CD4-positive, alpha-beta memory T cell (primary cell): ENCODE measurements at regions of chr9 and their contacts with region 1.

Region 1: GRCh38 chr9:100098887-100099721 is at the starts of genes ERP44 and INVS:
- DNase-seq: peak; percentile 96 to 99 (median 96)
- H3K4me3 ChIP-seq: peak within 1 kb of the TSS; percentile 85 to 89
- H3K4me3 Mint-ChIP-seq: peak within 1 kb of the TSS; percentile 94 to 100 (median 100)
- H3K27ac ChIP-seq: peak within 1 kb of the TSS; percentile 80
- H3K27ac Mint-ChIP-seq: peak within 1 kb of the TSS; percentile 91 to 99 (median 98)
- H3K4me1 ChIP-seq: peaks cover 26% of the 10 kb centered on the region
- H3K4me1 Mint-ChIP-seq: peaks cover 21 to 56% (median 36%) of the 10 kb centered on the region in 4 donors
- H3K27me3 ChIP-seq: no peaks in the 10 kb centered on the region
- H3K27me3 Mint-ChIP-seq: no peaks in the 10 kb centered on the region
- total RNA-seq, gene ERP44: 16.5 to 17.0 TPM
- total RNA-seq, gene INVS: 17.6 to 22.9 TPM

Region 2: GRCh38 chr9:99221621-99222415 is 877.3 kb before region 1 on chr9 and contains the starts of genes ALG2 and SEC61B:
- CTCF ChIA-PET with region 1: no interaction called
- POLR2A ChIA-PET with region 1: no interaction called
- intact Hi-C with region 1: loop called (anchors 5 kb)
- DNase-seq: peak; percentile 92 to 95 (median 93)
- H3K4me3 ChIP-seq: peak within 1 kb of the TSS; percentile 57 to 78
- H3K4me3 Mint-ChIP-seq: peak within 1 kb of the TSS; percentile 95 to 100 (median 98)
- H3K27ac ChIP-seq: peak within 1 kb of the TSS; percentile 82
- H3K27ac Mint-ChIP-seq: peak within 1 kb of the TSS; percentile 99 to 100 (median 100)
- H3K4me1 ChIP-seq: peaks cover 54% of the 10 kb centered on the region
- H3K4me1 Mint-ChIP-seq: peaks cover 51 to 93% (median 74%) of the 10 kb centered on the region in 4 donors
- H3K27me3 ChIP-seq: no peaks in the 10 kb centered on the region
- H3K27me3 Mint-ChIP-seq: no peaks in the 10 kb centered on the region
- total RNA-seq, gene ALG2: 39.1 to 39.8 TPM
- total RNA-seq, gene SEC61B: 101 to 106 TPM

Region 3: DNA sequence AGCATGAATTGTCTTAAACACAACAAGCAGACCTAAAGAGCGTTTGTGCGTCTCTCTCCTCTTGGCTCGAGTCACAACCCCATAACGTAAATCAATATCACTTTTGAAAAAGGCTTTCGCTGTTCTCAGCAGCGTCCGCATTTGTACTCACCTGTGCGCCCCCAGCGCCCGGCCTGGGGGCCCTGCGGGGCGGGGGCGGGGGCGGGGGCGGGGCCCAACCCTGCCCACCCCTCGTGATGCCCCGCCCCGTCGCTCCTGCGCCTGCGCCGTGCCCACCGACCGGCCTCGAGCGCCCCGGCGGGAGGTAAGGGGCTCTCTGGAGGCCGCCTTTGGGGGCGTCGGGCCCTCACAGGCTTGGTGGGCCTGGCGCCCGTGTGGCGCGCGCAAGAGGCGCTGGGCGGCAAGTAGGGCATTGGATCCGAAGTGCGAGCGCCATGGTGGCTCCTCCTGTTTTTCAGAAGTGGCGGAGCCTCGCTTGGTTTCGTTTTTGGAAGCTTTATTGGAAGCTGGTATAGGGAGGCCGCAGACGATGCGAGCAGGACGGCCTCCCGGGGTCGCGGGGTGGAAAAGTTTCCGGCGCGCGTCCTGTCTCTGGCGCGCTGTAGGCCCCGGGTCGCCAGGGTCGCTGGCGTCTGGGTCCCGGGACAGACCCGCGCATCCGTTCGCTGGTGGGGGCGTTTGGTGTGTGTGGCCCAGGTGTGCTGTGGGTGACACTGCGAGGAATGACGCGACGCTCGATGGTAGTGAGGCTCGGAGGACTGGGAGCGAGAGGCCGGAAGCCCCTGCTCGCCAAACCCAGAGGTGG is 192.5 kb before region 1 on chr9 and contains the start of gene STX17:
- CTCF ChIA-PET with region 1: interaction called, 3 read pairs
- POLR2A ChIA-PET with region 1: interaction called, 3 read pairs
- intact Hi-C with region 1: loop called (anchors 5 kb)
- DNase-seq: peak; percentile 85 to 92 (median 88)
- H3K4me3 ChIP-seq: peak within 1 kb of the TSS; percentile 26 to 90
- H3K4me3 Mint-ChIP-seq: peak within 1 kb of the TSS; percentile 96 to 100 (median 98)
- H3K27ac ChIP-seq: peak within 1 kb of the TSS; percentile 96
- H3K27ac Mint-ChIP-seq: peak within 1 kb of the TSS; percentile 99 to 100 (median 99)
- H3K4me1 ChIP-seq: peaks cover 26% of the 10 kb centered on the region
- H3K4me1 Mint-ChIP-seq: peaks cover 26 to 44% (median 34%) of the 10 kb centered on the region in 4 donors
- H3K27me3 ChIP-seq: no peaks in the 10 kb centered on the region
- H3K27me3 Mint-ChIP-seq: no peaks in the 10 kb centered on the region
- total RNA-seq, gene STX17: 52.2 to 61.5 TPM

Region 4: DNA sequence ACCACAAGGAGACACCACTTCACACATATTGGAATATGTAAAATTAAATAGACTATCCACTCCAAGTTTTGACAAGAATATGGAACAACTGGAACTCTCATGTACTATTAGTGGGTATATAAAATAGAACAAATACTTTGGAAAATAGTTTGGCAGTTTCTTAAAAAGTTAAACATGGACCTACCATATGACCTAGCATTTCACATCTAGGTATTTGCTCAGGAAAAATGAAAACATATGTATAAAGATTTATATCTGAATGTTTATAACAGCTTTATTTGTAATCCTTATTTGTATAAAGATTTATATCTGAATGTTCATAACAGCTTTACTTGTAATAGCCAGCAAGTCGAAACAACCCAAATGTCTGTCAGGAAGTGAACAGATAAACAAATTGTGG is 49.6 kb before region 1 on chr9:
- CTCF ChIA-PET with region 1: no interaction called
- POLR2A ChIA-PET with region 1: no interaction called
- intact Hi-C with region 1: no loop called
- DNase-seq: no peak
- H3K4me3 ChIP-seq: no peak overlapping the region
- H3K4me3 Mint-ChIP-seq: no peak overlapping the region
- H3K27ac ChIP-seq: no peak overlapping the region
- H3K27ac Mint-ChIP-seq: no peak overlapping the region
- H3K4me1 ChIP-seq: no peaks in the 10 kb centered on the region
- H3K4me1 Mint-ChIP-seq: peaks cover 13 to 22% (median 16%) of the 10 kb centered on the region in 4 donors
- H3K27me3 ChIP-seq: no peaks in the 10 kb centered on the region
- H3K27me3 Mint-ChIP-seq: no peaks in the 10 kb centered on the region

Region 5: DNA sequence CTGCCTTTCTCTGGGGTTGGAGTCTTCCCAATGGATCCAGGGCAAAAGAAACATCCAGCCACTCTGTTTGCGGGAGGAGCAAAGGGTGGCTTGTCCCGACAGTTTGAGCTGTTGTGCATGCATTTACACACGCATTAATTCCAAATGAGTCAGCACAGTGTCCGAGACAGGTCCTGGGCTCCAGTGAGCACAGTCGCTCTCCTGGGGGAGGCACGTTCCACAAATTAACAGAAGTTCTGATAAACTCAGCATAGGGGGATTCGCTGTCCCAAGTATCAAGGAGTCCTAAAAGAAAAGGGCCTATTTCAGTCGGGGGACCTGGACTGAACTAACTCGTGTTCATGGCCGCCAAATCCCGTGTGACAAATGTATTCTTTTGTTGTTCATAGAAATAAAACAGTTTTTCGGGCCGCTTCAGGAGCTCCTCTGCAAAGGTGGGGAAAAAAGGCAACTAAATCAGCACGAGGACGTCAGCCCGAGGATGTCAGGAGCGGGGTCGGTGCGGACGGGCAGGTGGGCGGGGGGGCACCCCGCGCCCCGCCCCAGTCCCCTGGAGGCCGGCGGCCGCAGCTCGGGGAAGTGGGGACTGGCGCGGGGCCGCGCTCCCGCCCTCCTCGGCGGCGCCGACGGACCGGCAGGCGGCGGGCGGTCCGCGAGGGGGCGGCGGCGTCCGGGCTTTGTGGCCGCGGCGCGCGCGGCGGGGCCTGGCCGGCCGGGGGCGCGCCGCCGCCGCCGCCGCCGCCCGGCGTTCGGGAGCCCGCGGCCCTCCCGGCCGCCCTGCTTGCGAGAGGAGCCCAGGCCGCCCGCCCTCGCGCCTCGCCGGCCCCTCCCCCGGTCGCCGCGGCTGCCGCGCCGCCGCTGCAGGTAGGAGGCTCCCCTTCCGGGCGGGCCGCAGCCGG is 327.7 kb after region 1 on chr9 and contains the start of gene MSANTD3:
- CTCF ChIA-PET with region 1: no interaction called
- POLR2A ChIA-PET with region 1: no interaction called
- intact Hi-C with region 1: loop called (anchors 5 kb)
- DNase-seq: peak; percentile 39 to 57 (median 48)
- H3K4me3 ChIP-seq: peak within 1 kb of the TSS; percentile 64 to 72
- H3K4me3 Mint-ChIP-seq: peak within 1 kb of the TSS; percentile 94 to 99 (median 96)
- H3K27ac ChIP-seq: peak within 1 kb of the TSS; percentile 40
- H3K27ac Mint-ChIP-seq: peak within 1 kb of the TSS; percentile 92 to 97 (median 95)
- H3K4me1 ChIP-seq: peaks cover 26% of the 10 kb centered on the region
- H3K4me1 Mint-ChIP-seq: peaks cover 27 to 50% (median 35%) of the 10 kb centered on the region in 4 donors
- H3K27me3 ChIP-seq: no peaks in the 10 kb centered on the region
- H3K27me3 Mint-ChIP-seq: peaks cover 1% of the 10 kb centered on the region in 2 donors
- total RNA-seq, gene MSANTD3: 14.4 to 14.8 TPM

Region 6: DNA sequence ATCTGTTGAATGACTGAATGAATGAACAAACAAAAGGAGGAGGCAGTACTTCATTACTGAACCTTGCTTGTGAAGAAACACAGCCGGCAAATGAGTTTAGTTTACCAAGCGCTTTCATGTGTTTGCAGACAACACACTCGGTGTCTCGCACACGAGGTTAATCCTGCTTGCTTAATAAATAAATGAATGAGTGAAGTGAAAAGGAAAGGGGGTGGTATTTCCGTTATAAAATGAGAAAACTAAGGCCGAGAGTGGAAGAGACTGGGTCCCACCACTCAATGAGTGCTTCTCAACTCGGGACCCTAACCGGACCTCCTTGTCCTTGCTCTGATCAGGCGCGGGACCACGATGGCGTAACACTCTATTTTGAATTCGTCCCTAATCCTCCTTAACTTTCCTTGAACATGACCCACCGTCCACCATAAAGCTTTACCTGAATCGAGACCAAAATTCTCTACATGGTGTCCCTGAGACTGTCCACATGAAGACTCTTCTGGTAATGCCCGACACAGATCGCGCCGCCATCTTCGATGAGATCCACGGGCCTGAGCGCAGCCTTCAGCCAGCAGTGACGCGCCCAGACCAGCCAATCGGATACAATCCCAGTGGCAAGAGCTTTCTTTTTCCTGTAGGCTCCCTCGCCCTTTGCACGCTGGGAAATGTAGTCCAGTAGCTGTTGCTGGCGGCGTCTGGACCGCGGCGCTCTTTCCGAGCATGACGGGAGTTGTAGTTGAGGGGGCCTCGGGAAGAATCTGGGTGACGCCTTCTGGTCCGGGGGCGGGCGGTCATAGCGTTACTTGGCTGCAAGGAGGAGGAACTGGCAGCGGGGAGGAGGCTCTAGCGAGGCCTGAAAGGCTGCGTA is 1299.2 kb after region 1 on chr9 and contains the starts of genes MRPL50 and ZNF189:
- CTCF ChIA-PET with region 1: no interaction called
- POLR2A ChIA-PET with region 1: no interaction called
- intact Hi-C with region 1: loop called (anchors 5 kb)
- DNase-seq: peak; percentile 95 to 100 (median 97)
- H3K4me3 ChIP-seq: peak within 1 kb of the TSS; percentile 75 to 86
- H3K4me3 Mint-ChIP-seq: peak within 1 kb of the TSS; percentile 98 to 100 (median 99)
- H3K27ac ChIP-seq: peak within 1 kb of the TSS; percentile 93
- H3K27ac Mint-ChIP-seq: peak within 1 kb of the TSS; percentile 98 to 100 (median 99)
- H3K4me1 ChIP-seq: peaks cover 64% of the 10 kb centered on the region
- H3K4me1 Mint-ChIP-seq: peaks cover 61 to 87% (median 78%) of the 10 kb centered on the region in 4 donors
- H3K27me3 ChIP-seq: no peaks in the 10 kb centered on the region
- H3K27me3 Mint-ChIP-seq: no peaks in the 10 kb centered on the region
- total RNA-seq, gene MRPL50: 20.9 to 23.0 TPM
- total RNA-seq, gene ZNF189: 22.1 to 23.2 TPM